Heart right ventricle (tissue), 16 donors: ENCODE measurements at regions of chr15 and their contacts with region 1.

Region 1: GRCh38 chr15:71443538-71443937 is 328.3 kb downstream of the THSD4 start:
- DNase-seq: peak; percentile 40 to 61
- ATAC-seq: peak in 4 of 8 donors; percentile 25 to 47 (median 36)
- H3K4me3 ChIP-seq: no peak overlapping the region
- H3K27ac ChIP-seq: peak overlapping the region in 3 of 10 donors; percentile 28 to 52 (median 46)
- H3K4me1 ChIP-seq: peaks cover 3 to 40% (median 25%) of the 10 kb centered on the region in 9 donors
- H3K27me3 ChIP-seq: no peaks in the 10 kb centered on the region
- CTCF ChIP-seq: peak; percentile 76 to 90 (median 84)

Region 2: DNA sequence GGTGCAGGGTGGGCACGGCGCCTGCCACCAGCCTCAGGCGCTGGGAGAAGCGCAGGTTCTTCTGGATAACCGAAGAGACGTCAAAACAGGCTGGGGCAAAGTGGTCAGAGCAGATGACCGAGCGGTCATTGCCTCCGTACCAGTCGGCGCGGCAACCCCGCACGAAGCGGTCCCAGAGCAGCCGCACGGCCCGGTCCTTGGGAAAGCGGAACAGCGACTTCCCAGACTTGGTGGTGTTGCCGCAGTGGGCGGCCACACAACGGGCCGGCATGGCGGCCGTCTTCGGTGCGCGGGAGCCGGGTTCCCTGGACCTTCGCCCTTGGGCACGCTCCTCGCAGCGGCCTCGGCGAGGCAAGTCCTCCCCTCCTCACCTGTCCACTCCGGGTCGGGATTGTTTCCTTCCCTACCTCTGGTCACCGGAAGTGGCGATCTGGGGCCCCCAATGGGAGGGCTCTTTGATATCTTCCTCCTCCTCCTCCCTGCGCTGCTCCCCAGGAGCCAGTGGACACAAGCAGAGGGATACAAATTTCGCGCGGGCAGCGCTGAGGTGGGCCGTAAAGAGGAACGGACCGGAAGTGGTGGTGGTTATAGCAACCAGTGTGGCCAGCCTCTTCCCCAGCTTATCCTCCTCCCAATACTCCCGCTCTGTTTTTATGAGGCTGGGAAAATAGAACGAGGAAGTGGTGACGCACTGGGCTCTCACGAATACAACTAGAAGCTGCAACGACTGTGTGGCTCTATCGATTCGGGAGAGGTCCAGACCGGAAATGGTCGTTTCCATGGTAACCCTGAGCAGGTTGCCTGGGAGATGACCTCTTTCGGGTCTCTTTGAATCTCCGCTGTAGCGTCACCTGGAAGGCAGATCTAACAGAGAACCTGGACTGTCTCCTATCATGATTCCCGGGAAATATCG is 551.3 kb before region 1 on chr15 and contains the starts of genes LRRC49 and THAP10:
- intact Hi-C with region 1: loop called in 4 of 10 experiments (anchors 5 to 10 kb)
- DNase-seq: peak; percentile 80 to 92
- ATAC-seq: peak; percentile 94 to 99 (median 98)
- H3K4me3 ChIP-seq: peak within 1 kb of the TSS; percentile 64 to 92 (median 68)
- H3K27ac ChIP-seq: peak within 1 kb of the TSS; percentile 41 to 86 (median 72)
- H3K4me1 ChIP-seq: peaks cover 0 to 26% (median 13%) of the 10 kb centered on the region in 9 donors
- H3K27me3 ChIP-seq: no peaks in the 10 kb centered on the region
- CTCF ChIP-seq: no peak
- total RNA-seq, gene LRRC49: 28.4 to 149 (median 78.9) TPM
- total RNA-seq, gene THAP10: 3.0 to 7.0 (median 5.0) TPM

Region 3: DNA sequence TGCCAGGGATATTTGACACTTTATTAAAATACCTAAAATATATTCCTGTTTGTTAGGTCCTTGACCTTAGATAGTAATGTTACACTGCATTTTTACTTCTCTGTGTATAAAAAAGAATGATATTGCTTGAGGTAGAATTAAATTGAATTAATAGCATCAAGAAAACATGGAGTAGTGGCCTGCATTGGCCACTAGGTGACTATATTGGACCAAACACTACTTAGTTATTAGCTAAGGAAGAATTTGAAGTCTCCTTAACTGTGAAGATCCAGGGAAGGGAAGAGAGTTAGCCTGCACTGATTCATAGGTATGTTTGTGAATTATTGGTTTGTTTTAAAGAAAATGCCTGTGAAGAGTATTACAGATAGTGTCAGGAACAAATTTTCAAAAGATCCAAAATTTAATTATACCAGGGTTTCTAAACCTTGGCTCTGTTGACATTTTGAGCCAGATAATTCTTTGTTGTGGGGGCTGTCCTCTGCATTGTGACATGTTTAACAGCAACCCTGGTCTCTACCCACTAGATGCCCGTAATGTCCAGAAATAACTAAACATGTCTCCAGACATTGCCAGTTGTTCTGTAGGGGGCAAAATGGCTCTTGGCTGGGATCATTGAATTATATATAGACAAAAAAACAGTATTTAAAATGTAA is 431.9 kb before region 1 on chr15:
- intact Hi-C with region 1: loop called in 8 of 10 experiments (anchors 2 to 10 kb)
- DNase-seq: no peak
- ATAC-seq: peak in 7 of 8 donors; percentile 71 to 84 (median 81)
- H3K4me3 ChIP-seq: peak overlapping the region in 5 of 10 donors; percentile 20 to 50 (median 48)
- H3K27ac ChIP-seq: peak overlapping the region in 2 of 10 donors; percentile 4 to 80
- H3K4me1 ChIP-seq: peaks cover 0 to 10% (median 3%) of the 10 kb centered on the region in 9 donors
- H3K27me3 ChIP-seq: no peaks in the 10 kb centered on the region
- CTCF ChIP-seq: peak; percentile 42 to 75 (median 70)

Region 4: DNA sequence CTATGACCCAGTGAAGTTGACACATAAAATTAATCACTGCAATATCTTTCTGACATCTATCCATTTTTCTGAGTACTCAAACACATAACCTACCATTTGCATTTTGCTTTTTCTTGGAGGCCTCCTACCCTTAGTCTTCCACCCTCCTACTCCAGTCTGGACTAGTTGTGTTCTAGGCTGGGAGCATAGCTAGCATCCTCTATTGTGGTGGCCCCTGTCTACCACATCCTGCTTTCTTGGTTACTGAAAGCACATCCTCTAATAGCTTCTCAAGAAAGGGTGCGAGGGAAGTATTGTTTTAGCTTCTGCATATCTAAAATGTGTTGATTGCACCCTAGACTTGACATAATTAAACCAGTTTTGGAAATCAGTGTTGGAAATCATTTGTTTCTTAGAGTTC is 151.8 kb before region 1 on chr15:
- intact Hi-C with region 1: no loop called
- DNase-seq: no peak
- ATAC-seq: no peak
- H3K4me3 ChIP-seq: no peak overlapping the region
- H3K27ac ChIP-seq: no peak overlapping the region
- H3K4me1 ChIP-seq: peaks cover 0 to 59% (median 35%) of the 10 kb centered on the region in 9 donors
- H3K27me3 ChIP-seq: no peaks in the 10 kb centered on the region
- CTCF ChIP-seq: no peak

Region 5: GRCh38 chr15:71386448-71387236 is 56.9 kb before region 1 on chr15:
- intact Hi-C with region 1: loop called in 6 of 10 experiments (anchors 2 to 5 kb)
- DNase-seq: no peak
- ATAC-seq: peak in 3 of 8 donors; percentile 55 to 60 (median 59)
- H3K4me3 ChIP-seq: no peak overlapping the region
- H3K27ac ChIP-seq: no peak overlapping the region
- H3K4me1 ChIP-seq: peaks cover 0 to 52% (median 21%) of the 10 kb centered on the region in 9 donors
- H3K27me3 ChIP-seq: no peaks in the 10 kb centered on the region
- CTCF ChIP-seq: peak in 8 of 9 donors; percentile 28 to 64 (median 52)

Region 6: DNA sequence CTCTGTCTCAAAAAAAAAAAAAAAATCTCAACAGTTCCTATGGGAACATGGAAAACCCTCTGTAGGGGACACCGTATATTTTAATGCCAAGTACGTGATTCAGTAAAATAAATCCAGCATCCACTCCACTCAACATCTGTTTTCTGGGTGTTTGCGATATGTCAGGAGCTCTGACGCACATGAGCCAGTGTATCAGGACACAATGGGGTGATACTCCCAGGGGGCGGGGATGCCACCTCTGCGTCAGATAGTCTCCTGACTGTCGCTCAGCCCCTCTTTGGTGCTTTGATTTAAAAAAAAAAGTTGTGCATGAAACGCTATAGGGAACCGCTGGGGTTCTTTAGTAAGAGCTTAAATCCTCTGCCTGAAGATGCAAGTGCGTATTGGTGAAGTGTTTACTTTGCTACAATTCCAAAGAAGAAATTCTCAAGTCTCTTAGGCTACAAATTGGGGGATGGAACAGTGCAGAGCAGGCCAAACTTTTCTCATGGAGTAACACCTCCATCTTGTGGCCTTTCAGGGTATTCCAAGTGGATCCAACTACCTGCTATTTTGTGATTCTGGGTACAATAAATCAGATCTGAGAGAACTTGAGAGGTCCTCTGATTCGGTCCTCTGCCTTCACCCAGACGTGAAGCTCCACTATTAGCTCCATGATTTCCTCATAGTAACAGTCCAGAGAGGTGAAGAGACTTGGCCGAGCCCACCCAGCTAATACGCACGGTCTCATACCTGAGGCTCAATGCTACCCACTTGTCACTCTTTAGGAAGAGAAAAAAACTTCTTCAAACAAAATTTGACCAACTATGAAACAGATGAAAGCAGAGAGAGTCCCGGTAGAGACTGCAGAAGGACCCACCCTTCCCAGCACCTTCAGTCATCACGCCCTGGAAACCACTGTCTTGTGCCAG is 357.6 kb after region 1 on chr15:
- intact Hi-C with region 1: loop called in 6 of 10 experiments (anchors 2 to 10 kb)
- DNase-seq: peak in 1 of 2 donors; percentile 40
- ATAC-seq: peak; percentile 65 to 90 (median 80)
- H3K4me3 ChIP-seq: no peak overlapping the region
- H3K27ac ChIP-seq: no peak overlapping the region
- H3K4me1 ChIP-seq: peaks cover 0 to 11% (median 5%) of the 10 kb centered on the region in 9 donors
- H3K27me3 ChIP-seq: peaks cover 0 to 4% (median 0%) of the 10 kb centered on the region in 7 donors
- CTCF ChIP-seq: peak; percentile 74 to 92 (median 85)